ENCODE measurements at regions of chr18 and their contacts with region 1.

Region 1: GRCh38 chr18:69580107-69580506 is 179.4 kb downstream of the DOK6 start:
- DNase-seq: peak; percentile 61
- H3K4me3 Mint-ChIP-seq: peak overlapping the region; percentile 11
- H3K27ac Mint-ChIP-seq: no peak overlapping the region
- H3K4me1 Mint-ChIP-seq: peaks cover 6% of the 10 kb centered on the region
- H3K27me3 Mint-ChIP-seq: no peaks in the 10 kb centered on the region

Region 2: DNA sequence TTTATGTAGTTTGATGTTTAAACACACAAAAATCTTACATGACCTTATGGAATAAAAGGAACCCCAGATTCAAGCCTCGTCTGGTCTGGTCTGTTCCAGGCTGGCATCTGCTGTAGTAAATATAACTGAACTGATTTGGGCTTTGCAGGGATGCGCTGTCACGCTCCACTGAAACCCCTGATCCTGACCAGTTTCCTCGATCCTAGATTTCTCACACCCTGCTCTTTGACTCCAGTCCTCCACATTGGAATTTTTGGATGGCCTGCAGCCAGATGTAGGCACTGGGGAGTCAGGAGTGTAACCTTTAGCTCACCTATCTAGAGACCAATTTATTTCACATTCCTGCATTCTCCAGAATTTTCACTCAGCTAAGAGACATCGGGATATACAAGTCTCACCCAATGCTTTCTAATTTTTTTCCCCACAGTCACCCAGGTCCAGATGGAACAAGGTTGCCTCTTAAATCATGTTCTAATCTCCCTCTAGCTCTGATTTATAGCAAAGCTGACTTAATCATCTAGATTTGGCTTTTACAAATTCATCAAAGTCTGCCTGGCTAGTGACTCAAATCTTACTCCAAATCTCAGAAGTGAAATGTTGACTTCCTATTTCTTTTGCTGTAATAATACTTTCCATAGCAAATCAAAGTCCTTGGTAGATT is 147.9 kb after region 1 on chr18:
- intact Hi-C with region 1: no loop called
- DNase-seq: no peak
- H3K4me3 Mint-ChIP-seq: no peak overlapping the region
- H3K27ac Mint-ChIP-seq: no peak overlapping the region
- H3K4me1 Mint-ChIP-seq: no peaks in the 10 kb centered on the region
- H3K27me3 Mint-ChIP-seq: no peaks in the 10 kb centered on the region

Region 3: DNA sequence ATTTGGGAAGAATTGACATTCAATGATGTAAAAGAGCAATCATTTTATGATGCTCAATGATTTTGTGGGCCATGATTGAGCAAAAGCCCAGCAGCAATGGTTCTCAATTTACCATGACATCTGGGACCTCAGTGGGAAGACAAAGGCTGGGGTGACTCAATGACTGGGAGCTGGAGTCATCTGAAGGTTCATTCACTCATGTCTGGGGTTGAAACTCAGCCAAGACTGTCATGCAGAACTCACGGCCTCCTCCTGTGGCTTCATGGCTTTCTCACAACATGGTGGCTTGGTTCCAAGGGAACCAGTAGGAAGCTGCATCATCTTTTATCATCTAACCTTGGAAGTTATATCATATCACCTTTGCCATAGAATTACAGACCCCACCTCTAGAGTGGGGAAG is 412.7 kb after region 1 on chr18:
- intact Hi-C with region 1: loop called (anchors 10 kb)
- DNase-seq: peak; percentile 36
- H3K4me3 Mint-ChIP-seq: no peak overlapping the region
- H3K27ac Mint-ChIP-seq: no peak overlapping the region
- H3K4me1 Mint-ChIP-seq: peaks cover 9% of the 10 kb centered on the region
- H3K27me3 Mint-ChIP-seq: no peaks in the 10 kb centered on the region